Transverse colon (tissue), 4 donors: ENCODE measurements at regions of chr19 and their contacts with region 1.

Region 1: GRCh38 chr19:40305403-40305802 is 20.3 kb upstream of the AKT2 start:
- DNase-seq: peak; percentile 82
- H3K4me3 ChIP-seq: no peak overlapping the region
- H3K27ac ChIP-seq: no peak overlapping the region
- H3K4me1 ChIP-seq: no peaks in the 10 kb centered on the region
- H3K27me3 ChIP-seq: no peaks in the 10 kb centered on the region
- CTCF ChIP-seq: peak; percentile 57 to 76 (median 69)
- EP300 ChIP-seq: no peak
- POLR2A ChIP-seq: no peak

Region 2: DNA sequence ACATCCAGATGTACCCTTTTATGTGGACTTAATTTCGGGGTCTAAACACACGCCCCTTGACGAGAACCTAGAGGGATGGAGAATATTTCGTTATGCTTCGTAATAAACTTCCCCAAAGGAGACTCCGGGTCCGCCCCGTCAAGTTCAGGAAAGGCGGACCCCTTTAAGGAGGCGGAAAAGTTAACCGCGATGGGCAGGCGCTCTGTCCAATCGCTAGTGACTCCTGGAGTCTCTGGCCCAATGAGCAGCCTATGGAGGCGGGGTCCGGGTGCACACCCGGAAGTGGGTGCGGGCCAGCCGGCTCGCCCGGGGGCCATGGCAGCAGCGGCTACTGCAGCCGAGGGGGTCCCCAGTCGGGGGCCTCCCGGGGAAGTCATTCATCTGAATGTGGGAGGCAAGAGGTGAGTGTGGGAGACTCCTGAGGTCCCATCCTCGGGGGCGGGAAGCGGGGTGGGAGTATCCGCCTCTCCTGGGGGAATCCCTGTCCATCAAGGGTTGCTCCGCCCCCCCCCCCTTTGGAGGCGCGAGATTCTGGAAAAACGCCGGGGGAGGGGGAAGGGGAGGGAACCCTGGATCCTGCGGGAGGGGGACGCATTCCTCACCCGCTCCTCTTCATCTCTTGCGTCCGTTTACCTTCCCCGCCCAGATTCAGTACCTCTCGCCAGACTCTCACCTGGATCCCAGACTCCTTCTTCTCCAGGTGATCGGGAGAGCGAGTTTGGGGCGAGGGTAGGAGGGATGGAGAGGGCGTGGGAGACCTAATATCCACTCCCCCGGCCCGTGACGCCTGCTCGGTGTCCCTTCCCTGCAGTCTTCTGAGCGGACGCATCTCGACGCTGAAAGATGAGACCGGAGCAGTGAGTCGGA is 271.4 kb after region 1 on chr19 and contains the start of gene SHKBP1:
- in situ Hi-C with region 1: loop called in 1 of 4 experiments (anchors 25 kb)
- intact Hi-C with region 1: no loop called
- DNase-seq: peak; percentile 96
- H3K4me3 ChIP-seq: peak within 1 kb of the TSS; percentile 53 to 74 (median 66)
- H3K27ac ChIP-seq: peak within 1 kb of the TSS; percentile 76 to 85 (median 80)
- H3K4me1 ChIP-seq: peaks cover 0 to 21% (median 12%) of the 10 kb centered on the region in 4 donors
- H3K27me3 ChIP-seq: no peaks in the 10 kb centered on the region
- CTCF ChIP-seq: no peak
- EP300 ChIP-seq: no peak
- POLR2A ChIP-seq: peak; percentile 79
- total RNA-seq, gene SHKBP1: 58.7 to 111 (median 60.9) TPM